ENCODE measurements at regions of chr10 and their contacts with region 1.

Region 1: GRCh38 chr10:91006001-91006751 is 85.3 kb upstream of the ANKRD1 start:
- DNase-seq: peak; percentile 37 to 78 (median 68)
- ATAC-seq: peak; percentile 95
- H3K4me3 ChIP-seq: peak overlapping the region; percentile 7
- H3K4me3 Mint-ChIP-seq: peak overlapping the region in 9 of 10 donors; percentile 31 to 76 (median 68)
- H3K27ac ChIP-seq: peak overlapping the region; percentile 21
- H3K27ac Mint-ChIP-seq: peak overlapping the region; percentile 37 to 86 (median 74)
- H3K4me1 ChIP-seq: peaks cover 7 to 19% of the 10 kb centered on the region in 2 donors
- H3K4me1 Mint-ChIP-seq: peaks cover 0 to 26% (median 21%) of the 10 kb centered on the region in 7 donors
- H3K27me3 ChIP-seq: no peaks in the 10 kb centered on the region
- H3K27me3 Mint-ChIP-seq: peaks cover 0 to 22% (median 0%) of the 10 kb centered on the region in 5 donors

Region 2: DNA sequence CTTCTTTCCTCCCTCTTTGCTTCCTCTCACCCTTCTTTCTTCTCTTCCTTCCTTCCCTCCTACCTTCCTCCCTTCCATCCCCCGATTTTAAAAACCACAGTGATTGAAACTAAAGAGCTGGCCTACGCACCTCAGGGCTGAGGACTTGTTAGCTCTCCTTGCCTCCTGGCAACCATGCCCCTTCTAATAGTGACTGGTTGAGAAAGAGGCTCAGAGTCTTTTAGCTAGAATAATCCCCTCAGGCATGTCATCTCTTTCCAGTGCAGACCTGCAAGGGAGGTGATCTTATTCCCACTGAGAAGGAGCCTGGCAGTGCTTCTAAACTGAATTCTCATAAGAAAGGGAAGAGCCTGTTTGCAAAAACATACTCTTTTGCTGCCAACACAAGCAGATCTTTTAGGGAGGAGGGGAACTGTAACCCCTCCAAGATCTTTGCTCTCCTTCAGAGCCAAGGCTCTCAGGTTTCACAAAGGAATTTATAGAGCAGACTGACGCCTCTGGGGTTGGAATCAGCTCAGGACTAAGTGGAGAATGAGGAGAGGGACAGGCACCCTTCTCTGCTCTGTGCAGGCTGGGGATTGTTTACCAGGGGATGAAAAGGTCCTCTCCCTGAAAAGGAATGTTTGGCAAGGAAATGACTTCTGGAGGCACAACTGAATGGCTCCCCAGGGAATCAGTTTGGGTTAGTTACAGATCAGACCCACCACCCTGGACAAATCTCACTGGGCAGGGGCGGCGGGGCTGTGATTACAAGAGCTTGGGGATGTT is 75.9 kb before region 1 on chr10:
- CTCF ChIA-PET with region 1: no interaction called
- POLR2A ChIA-PET with region 1: no interaction called
- intact Hi-C with region 1: no loop called
- DNase-seq: no peak
- ATAC-seq: no peak
- H3K4me3 ChIP-seq: no peak overlapping the region
- H3K4me3 Mint-ChIP-seq: no peak overlapping the region
- H3K27ac ChIP-seq: no peak overlapping the region
- H3K27ac Mint-ChIP-seq: no peak overlapping the region
- H3K4me1 ChIP-seq: no peaks in the 10 kb centered on the region
- H3K4me1 Mint-ChIP-seq: peaks cover 0 to 3% (median 0%) of the 10 kb centered on the region in 7 donors
- H3K27me3 ChIP-seq: no peaks in the 10 kb centered on the region
- H3K27me3 Mint-ChIP-seq: peaks cover 0 to 48% (median 24%) of the 10 kb centered on the region in 5 donors

Region 3: GRCh38 chr10:91034494-91035159 is 28.5 kb after region 1 on chr10:
- CTCF ChIA-PET with region 1: interaction called, 10 read pairs
- POLR2A ChIA-PET with region 1: interaction called, 4 read pairs
- intact Hi-C with region 1: loop called in 1 of 2 experiments (anchors 1 kb)
- DNase-seq: no peak
- ATAC-seq: no peak
- H3K4me3 ChIP-seq: no peak overlapping the region
- H3K4me3 Mint-ChIP-seq: peak overlapping the region in 9 of 10 donors; percentile 43 to 88 (median 64)
- H3K27ac ChIP-seq: peak overlapping the region; percentile 57
- H3K27ac Mint-ChIP-seq: peak overlapping the region; percentile 86 to 97 (median 89)
- H3K4me1 ChIP-seq: peaks cover 14 to 17% of the 10 kb centered on the region in 2 donors
- H3K4me1 Mint-ChIP-seq: peaks cover 14 to 33% (median 30%) of the 10 kb centered on the region in 7 donors
- H3K27me3 ChIP-seq: no peaks in the 10 kb centered on the region
- H3K27me3 Mint-ChIP-seq: peaks cover 0 to 19% (median 0%) of the 10 kb centered on the region in 5 donors

Region 4: GRCh38 chr10:91163269-91163868 is 157.2 kb after region 1 on chr10:
- CTCF ChIA-PET with region 1: interaction called, 3 read pairs
- POLR2A ChIA-PET with region 1: interaction called, 4 read pairs
- intact Hi-C with region 1: loop called (anchors 1 to 2 kb)
- DNase-seq: peak; percentile 72 to 92 (median 88)
- ATAC-seq: peak; percentile 75
- H3K4me3 ChIP-seq: peak overlapping the region; percentile 74
- H3K4me3 Mint-ChIP-seq: peak overlapping the region; percentile 88 to 95 (median 93)
- H3K27ac ChIP-seq: peak overlapping the region; percentile 96
- H3K27ac Mint-ChIP-seq: peak overlapping the region; percentile 88 to 98 (median 95)
- H3K4me1 ChIP-seq: peaks cover 8 to 20% of the 10 kb centered on the region in 2 donors
- H3K4me1 Mint-ChIP-seq: peaks cover 27 to 61% (median 51%) of the 10 kb centered on the region in 7 donors
- H3K27me3 ChIP-seq: no peaks in the 10 kb centered on the region
- H3K27me3 Mint-ChIP-seq: peaks cover 0 to 19% (median 0%) of the 10 kb centered on the region in 5 donors

Region 5: DNA sequence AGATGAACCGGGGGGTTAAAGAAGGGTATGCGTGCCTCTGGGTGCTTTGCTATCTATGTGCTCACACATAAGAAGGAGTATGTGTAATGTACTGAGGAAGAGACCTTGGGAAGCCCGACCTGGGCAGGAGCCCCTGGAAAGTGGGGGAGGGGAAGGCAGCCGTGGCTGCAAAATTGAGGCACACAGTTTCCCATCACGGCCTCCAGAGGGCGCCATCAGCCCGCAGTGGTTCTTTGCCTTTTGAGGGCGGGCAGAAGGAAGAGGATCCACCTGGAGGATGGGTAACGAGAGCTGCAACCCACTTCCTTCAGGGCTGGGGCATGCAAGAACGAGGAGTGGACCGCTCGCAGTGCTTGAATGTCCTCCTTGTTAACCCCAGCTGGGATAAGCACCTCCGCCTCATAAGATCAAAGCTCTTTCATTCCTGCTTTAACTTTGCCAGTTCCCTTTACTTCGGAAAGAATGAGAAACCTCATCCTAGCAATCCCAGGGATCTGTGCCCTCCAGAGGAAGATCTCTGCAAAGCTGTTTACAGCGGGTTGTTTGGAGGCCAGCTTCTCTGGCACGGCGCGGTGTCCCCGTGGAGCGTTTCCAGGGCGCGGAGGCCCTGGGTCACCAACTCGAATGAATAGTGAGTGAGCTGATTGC is 292.2 kb after region 1 on chr10:
- CTCF ChIA-PET with region 1: no interaction called
- POLR2A ChIA-PET with region 1: no interaction called
- intact Hi-C with region 1: loop called in 1 of 2 experiments (anchors 2 kb)
- DNase-seq: peak; percentile 63 to 84 (median 77)
- ATAC-seq: peak; percentile 96
- H3K4me3 ChIP-seq: peak overlapping the region; percentile 53
- H3K4me3 Mint-ChIP-seq: peak overlapping the region; percentile 67 to 83 (median 74)
- H3K27ac ChIP-seq: no peak overlapping the region
- H3K27ac Mint-ChIP-seq: peak overlapping the region in 4 of 9 donors; percentile 7 to 74 (median 42)
- H3K4me1 ChIP-seq: peaks cover 0 to 4% of the 10 kb centered on the region in 2 donors
- H3K4me1 Mint-ChIP-seq: peaks cover 4 to 11% (median 10%) of the 10 kb centered on the region in 7 donors
- H3K27me3 ChIP-seq: no peaks in the 10 kb centered on the region
- H3K27me3 Mint-ChIP-seq: peaks cover 6 to 16% (median 10%) of the 10 kb centered on the region in 5 donors

Region 6: DNA sequence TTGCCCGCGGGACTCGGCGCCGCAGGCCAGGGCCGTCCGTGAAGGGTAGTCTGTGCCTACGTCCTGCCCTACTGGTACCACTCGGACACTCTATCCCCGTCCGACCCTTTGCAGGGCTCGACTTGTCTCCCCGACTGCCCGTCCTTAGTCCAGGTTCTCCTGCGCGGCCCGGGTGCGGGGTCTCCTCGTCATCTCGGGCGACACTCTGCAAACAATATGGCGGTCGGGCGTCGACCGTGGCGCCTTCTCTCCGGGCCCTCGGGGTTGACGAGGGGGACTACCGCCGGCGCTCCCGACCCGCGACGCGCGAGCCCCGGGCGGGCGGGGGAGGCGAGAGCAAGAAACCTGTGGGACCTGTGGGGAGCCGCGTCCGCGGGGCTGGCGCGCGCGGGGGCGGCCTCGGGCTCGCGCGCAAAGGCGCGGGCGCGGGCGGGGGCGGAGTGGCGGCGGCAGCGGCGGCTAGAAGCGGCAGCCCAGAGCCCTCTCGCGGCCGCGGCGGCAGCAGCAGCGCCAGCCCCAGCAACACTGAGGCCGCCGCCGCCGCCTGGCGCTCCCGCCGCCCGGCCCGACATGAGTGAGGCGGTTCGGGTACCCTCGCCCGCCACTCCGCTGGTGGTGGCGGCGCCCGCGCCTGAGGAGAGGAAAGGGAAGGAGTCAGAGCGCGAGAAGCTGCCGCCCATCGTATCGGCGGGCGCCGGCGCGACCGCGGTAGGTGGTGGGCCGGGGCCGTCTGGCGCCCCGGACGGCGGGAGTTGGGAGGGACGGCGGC is 403.9 kb after region 1 on chr10 and contains the start of gene HECTD2:
- CTCF ChIA-PET with region 1: no interaction called
- POLR2A ChIA-PET with region 1: no interaction called
- intact Hi-C with region 1: loop called (anchors 1 kb)
- DNase-seq: peak; percentile 76 to 89 (median 86)
- ATAC-seq: peak; percentile 93
- H3K4me3 ChIP-seq: peak within 1 kb of the TSS; percentile 83
- H3K4me3 Mint-ChIP-seq: peak within 1 kb of the TSS; percentile 75 to 93 (median 90)
- H3K27ac ChIP-seq: peak within 1 kb of the TSS; percentile 88
- H3K27ac Mint-ChIP-seq: peak within 1 kb of the TSS; percentile 81 to 96 (median 91)
- H3K4me1 ChIP-seq: peaks cover 8 to 17% of the 10 kb centered on the region in 2 donors
- H3K4me1 Mint-ChIP-seq: peaks cover 8 to 18% (median 13%) of the 10 kb centered on the region in 7 donors
- H3K27me3 ChIP-seq: no peaks in the 10 kb centered on the region
- H3K27me3 Mint-ChIP-seq: peaks cover 0 to 27% (median 0%) of the 10 kb centered on the region in 5 donors
- total RNA-seq, gene HECTD2: 1.1 to 4.6 (median 2.0) TPM